Posterior vena cava (tissue), 2 donors: ENCODE measurements at regions of chr18 and their contacts with region 1.

Region 1: GRCh38 chr18:35306588-35307250 is 16.7 kb upstream of the ZSCAN30 start:
- DNase-seq: no peak

Region 2: DNA sequence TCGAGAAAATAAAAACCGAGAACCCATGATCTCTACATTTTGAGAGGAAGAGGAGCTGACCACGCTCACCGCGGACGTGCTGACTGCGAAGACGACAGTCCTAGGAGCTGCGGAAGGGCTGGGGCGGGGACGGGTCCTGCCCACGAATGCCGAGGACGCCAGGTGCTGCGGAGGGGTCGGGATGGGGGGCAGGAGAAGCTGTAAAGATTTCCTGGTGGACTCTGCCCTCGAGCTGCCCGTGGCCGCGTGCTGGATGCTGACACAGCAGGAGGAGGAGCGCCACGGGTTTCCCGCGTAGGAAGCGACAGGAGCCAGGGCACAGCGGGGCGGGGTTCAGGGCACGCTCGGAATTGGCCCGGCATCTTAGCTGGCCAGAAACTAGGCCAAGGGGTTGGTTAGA is 38.9 kb before region 1 on chr18:
- intact Hi-C with region 1: loop called in 1 of 2 experiments (anchors 1 kb)
- DNase-seq: peak; percentile 86

Region 3: DNA sequence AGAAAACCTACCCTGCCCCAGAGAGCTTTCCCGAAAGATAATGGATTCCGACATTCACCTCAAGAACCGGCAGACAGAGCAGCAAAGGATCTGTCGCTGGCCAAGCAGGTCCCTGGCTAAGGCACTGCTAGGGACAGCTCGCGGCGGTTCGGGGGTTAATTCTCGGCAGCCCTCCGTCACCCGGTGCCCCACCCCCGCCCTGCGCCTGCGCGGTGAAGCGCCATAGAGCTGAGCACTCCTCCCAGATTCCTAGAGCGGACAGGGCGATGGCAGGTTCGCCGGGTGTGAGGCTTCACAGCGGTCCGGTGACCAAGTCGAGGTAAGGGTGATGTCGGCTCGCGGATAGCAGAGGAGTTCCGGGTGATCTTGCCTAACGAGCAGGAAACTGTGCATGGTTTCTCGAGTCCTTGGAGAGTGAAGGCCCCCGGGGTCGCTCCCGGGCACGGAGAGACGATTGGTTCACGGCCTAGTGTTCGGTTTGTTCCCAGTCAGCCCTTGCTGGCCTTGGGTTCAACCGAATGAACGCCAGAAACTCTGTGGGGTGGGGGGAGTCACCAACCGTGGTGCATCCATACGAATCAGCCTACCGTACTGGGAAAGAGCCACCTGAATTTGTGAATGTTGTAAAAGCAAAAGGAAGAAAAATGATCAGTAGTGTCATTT is 16.5 kb before region 1 on chr18 and contains the start of gene ZSCAN30:
- intact Hi-C with region 1: no loop called
- DNase-seq: peak; percentile 98
- total RNA-seq, gene ZSCAN30: 12.8 to 14.9 TPM

Region 4: GRCh38 chr18:36012891-36013290 is 706.2 kb after region 1 on chr18:
- intact Hi-C with region 1: no loop called
- DNase-seq: no peak

Region 5: DNA sequence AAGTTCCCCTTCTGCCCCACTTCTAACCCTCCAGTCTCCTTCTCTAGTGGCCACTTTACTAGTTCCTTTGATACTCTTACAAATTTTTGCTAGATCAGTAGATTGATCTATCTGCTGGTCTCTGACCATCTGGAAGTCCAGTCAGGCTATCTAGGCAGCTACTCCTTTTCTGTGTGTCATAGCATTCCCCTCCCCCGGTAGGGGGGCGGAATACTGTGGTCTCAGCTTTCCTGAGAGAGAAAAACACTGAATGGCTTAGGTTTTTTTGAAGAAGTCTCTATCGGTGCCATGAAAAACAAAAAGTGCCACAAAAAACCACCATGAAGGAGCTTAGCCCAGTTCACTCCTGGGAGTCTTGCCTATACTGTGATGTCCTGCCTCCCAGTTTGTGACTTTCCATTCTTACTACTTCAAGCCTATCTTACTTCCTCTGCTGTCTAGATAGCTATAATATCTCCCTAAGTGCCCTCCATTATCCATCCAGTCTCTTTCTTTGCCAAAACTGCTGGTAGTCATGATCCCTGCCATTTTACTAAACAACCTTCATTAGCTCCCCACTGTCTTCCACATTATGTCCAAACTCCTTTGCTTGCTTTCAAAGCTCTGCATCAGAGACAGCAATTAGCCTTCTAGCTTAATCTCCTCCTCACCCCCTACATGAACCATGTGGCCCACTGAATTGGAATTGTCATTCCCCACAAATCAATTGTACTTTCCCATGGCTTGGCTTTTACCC is 1492.2 kb after region 1 on chr18:
- intact Hi-C with region 1: loop called in 1 of 2 experiments (anchors 5 kb)
- DNase-seq: no peak